ENCODE measurements at regions of chr10 and their contacts with region 1.

Region 1: DNA sequence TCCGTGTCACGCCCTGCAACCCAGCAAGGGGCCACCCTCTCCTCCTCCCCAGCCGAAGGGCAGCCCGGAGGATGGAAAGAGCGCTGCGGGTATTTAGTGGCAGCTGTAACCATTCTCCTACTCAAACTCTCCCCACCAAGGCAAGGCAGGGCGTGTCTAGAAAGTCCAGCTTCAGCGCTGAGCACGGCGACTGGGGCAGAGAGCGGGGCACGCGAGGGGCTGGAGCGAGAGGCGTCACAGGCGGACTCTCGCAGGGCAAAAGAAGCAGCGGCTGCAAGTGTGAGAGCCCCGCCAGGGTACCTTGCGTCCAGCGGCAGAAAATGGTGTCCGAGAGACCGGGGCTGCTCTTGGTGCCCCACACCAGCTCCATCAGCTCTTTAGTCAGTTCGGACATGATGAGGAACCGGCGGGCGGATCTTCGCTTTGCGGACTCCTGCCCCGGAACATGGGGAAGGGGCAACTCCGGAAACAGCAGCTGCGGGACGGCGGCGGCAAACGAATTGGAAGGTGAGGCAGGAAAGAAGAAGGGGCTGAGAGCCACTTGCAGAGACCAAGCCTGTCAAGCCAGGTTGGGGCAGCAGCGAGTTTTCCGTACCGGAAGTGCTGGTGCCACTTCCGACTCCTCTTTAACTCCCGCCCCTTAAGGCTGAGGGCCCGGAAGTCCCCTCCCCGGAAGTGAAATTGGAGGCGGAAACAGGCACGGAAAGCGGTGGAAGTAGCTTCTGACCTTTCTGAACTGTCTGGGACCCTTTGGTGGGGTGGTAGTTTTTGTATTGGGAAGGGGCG is at the start of gene MINDY3:
- DNase-seq: peak; percentile 80

Region 2: DNA sequence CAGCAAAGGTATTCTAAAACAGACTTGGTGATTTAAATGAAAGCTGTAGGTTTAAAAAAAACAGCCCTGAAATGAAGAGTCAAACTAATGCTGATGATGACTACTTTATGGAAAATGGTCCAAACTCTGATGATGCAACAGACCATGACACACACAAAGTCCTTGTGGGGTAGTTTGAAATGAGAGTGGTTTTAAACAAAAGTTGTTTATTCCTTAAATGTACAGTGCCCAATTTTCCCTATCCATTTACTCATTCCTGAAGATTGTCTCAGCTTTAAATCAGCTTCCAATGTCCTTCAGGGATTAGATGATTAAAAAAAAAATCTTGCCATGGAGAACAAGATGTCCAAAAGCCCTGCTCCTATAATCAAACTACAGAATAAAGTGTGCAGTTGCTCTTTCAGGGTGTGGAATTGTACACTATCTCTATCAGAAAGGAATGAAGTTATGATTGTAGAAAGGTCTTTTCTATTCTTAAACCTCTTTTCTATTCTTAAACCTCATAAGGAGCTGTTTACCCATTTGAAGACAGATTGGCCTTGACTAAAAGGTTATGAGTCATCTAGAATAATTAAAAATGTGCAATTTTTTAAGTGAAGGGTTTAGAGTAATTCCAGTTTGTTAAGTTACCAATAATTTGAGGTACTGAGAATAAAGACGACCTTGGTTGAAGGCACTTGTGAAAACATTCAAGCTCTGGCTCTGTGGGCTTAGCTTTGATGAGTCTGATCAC is 70.1 kb before region 1 on chr10:
- CTCF ChIA-PET with region 1: no interaction called
- POLR2A ChIA-PET with region 1: interaction called, 10 read pairs
- DNase-seq: no peak

Region 3: GRCh38 chr10:15842556-15843169 is 17.4 kb before region 1 on chr10:
- CTCF ChIA-PET with region 1: interaction called, 3 read pairs
- POLR2A ChIA-PET with region 1: interaction called, 11 read pairs
- DNase-seq: no peak

Region 4: GRCh38 chr10:15877836-15878576 is 17.9 kb after region 1 on chr10:
- CTCF ChIA-PET with region 1: no interaction called
- POLR2A ChIA-PET with region 1: no interaction called
- DNase-seq: no peak